Pancreas (tissue), 10 donors: ENCODE measurements at regions of chr15 and their contacts with region 1.

Region 1: GRCh38 chr15:90004671-90005070 is 3.5 kb downstream of the ZNF710 start:
- DNase-seq: peak in 1 of 6 donors; percentile 31
- ATAC-seq: peak in 2 of 4 donors; percentile 6 to 43
- H3K4me3 ChIP-seq: peak overlapping the region in 1 of 4 donors; percentile 82
- H3K27ac ChIP-seq: peak overlapping the region in 3 of 4 donors; percentile 74 to 93 (median 93)
- H3K4me1 ChIP-seq: peaks cover 22 to 45% (median 35%) of the 10 kb centered on the region in 3 donors
- H3K27me3 ChIP-seq: no peaks in the 10 kb centered on the region
- CTCF ChIP-seq: no peak

Region 2: DNA sequence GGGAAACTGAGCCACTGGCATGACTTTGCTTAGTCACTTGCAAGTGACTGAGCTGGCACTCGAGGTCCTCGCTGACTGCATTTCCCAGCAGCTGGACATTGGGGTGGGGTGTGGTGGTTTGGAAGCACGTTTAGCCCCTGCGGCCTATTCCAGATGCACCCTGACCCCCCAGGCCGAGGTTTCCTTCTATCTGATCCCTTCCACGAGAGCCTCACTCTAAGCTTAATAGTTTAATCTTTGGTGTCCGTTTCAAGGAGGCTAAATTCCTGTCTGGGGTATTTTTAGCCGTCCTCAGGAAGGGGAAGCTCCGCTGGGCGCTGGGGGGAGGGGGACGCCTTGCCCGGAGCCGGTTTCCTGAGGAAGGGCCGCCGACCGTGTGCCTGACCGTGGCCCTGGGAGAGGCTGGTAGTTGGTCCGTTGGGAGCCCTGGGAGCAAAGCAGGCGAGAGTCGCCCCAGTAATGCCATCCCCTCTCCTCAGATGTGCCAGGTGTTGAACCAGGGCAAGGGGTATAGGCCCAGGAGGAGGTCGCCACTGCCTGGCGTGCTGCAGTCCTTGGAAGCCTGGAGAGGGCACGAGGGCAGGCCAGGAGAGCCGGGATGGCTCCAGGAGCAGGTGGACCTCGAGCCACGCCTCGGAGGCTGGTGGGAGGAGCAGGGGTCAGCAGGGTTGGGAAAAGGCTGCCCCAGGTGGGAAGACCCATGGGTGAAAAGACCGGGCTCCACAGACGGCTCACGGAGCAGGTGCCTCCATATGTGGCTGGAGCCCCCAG is 60.4 kb after region 1 on chr15:
- intact Hi-C with region 1: loop called in 2 of 3 experiments (anchors 5 kb)
- DNase-seq: peak in 1 of 6 donors; percentile 35
- ATAC-seq: no peak
- H3K4me3 ChIP-seq: no peak overlapping the region
- H3K27ac ChIP-seq: peak overlapping the region in 2 of 4 donors; percentile 84 to 85
- H3K4me1 ChIP-seq: peaks cover 28 to 36% (median 30%) of the 10 kb centered on the region in 3 donors
- H3K27me3 ChIP-seq: no peaks in the 10 kb centered on the region
- CTCF ChIP-seq: no peak

Region 3: DNA sequence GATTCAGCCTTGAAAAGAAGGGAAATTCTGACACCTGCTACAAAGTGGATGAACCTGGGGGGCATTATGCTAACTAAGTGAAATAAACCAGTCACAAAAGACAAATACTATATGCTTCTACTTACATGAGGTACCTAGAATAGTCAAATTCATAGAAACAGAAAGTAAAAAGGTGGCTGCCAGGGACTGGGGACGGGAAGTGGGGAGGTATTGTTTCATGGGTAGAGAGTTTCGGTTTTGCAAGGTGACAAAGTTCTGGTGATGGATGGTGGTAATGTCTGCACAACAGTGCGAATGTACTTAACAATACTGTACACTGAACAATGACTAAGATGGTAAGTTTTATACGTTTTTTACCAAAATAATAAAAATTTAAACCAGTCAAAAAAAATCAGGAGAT is 92.8 kb after region 1 on chr15:
- intact Hi-C with region 1: no loop called
- DNase-seq: no peak
- ATAC-seq: peak in 1 of 4 donors; percentile 1
- H3K4me3 ChIP-seq: peak overlapping the region in 1 of 4 donors; percentile 12
- H3K27ac ChIP-seq: peak overlapping the region in 2 of 4 donors; percentile 82 to 98
- H3K4me1 ChIP-seq: peaks cover 50 to 72% (median 54%) of the 10 kb centered on the region in 3 donors
- H3K27me3 ChIP-seq: no peaks in the 10 kb centered on the region
- CTCF ChIP-seq: no peak